B cell (primary cell): ENCODE measurements at regions of chr22 and their contacts with region 1.

Region 1: DNA sequence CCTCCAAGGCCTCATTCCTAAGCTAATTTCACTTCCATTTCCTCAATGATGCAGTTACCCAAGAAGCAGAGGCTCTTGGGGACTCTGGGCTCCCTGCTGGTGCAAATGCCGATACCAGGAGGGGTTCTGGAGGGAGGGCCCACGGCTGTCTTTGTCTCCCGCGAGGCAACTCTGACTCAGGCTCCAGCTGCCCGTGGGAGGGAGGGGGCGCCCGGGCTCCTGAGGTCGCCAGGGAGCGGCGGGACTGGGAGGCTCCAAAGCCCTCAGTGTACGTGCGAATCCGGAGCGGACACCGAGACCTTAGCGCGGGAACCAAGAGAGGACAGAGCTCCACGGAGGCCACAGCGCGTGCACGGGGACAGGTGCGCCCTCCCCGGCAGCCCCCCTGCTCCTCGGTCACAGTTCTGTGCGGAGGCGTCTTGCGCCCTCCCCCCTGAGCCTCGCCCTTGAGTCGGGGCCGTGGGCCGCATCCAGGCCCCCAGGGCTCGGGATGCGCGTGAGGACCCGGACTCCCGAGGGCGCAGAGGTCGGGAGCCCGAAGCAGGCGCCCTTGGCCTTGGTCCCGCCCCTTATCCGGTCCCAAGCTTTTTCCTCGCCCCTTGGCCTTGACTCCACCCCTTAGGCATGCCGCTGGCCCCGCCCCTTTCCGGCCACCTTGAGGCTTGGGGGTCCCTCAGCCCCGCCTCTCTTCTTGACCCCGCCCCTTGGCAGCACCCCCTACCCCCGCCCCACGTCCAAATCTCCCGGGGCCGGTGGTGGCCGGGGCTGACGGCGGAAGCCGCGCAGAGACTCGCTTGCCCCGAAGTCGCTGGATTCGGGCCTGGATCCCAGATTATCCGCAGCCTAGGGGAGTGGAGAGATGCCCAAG is 4.7 kb upstream of the SHISA8 start:
- DNase-seq: peak; percentile 93
- ATAC-seq: peak; percentile 54
- H3K4me3 ChIP-seq: peak overlapping the region; percentile 14 to 60 (median 52)
- H3K4me3 Mint-ChIP-seq: peak overlapping the region; percentile 86
- H3K27ac ChIP-seq: peak overlapping the region; percentile 89 to 93
- H3K27ac Mint-ChIP-seq: peak overlapping the region; percentile 97
- H3K4me1 ChIP-seq: peaks cover 79 to 86% of the 10 kb centered on the region in 2 donors
- H3K4me1 Mint-ChIP-seq: peaks cover 78% of the 10 kb centered on the region
- H3K27me3 ChIP-seq: peaks cover 0 to 8% (median 3%) of the 10 kb centered on the region in 4 experiments
- H3K27me3 Mint-ChIP-seq: no peaks in the 10 kb centered on the region
- CTCF ChIP-seq: no peak

Region 2: DNA sequence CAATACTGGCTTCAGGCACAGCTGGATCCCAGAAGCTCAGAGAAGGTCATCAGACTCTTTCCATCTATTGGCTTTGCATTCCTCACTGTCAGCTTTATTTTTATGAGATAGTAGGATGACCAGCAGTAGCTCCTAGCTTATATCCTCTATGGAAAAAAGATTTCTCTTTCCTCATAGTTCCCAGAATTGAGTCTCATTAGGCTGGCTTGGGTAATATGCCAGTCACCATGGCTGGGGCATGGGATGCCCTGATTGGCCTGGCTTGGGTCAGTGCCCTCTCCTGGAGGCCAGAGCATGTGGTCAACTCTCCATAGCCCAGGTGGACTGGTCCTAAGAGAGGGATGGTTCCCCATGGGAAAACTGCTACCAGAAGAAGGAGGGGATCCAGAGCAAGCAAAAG is 133.2 kb before region 1 on chr22:
- CTCF ChIA-PET with region 1: no interaction called
- POLR2A ChIA-PET with region 1: interaction called, 12 read pairs
- intact Hi-C with region 1: no loop called
- DNase-seq: no peak
- ATAC-seq: no peak
- H3K4me3 ChIP-seq: no peak overlapping the region
- H3K4me3 Mint-ChIP-seq: no peak overlapping the region
- H3K27ac ChIP-seq: no peak overlapping the region
- H3K27ac Mint-ChIP-seq: no peak overlapping the region
- H3K4me1 ChIP-seq: peaks cover 16 to 18% of the 10 kb centered on the region in 2 donors
- H3K4me1 Mint-ChIP-seq: peaks cover 23% of the 10 kb centered on the region
- H3K27me3 ChIP-seq: no peaks in the 10 kb centered on the region
- H3K27me3 Mint-ChIP-seq: no peaks in the 10 kb centered on the region
- CTCF ChIP-seq: no peak